Head of caudate nucleus (tissue), 42 donors: ENCODE measurements at regions of chr7 and their contacts with region 1.

Region 1: GRCh38 chr7:7542251-7542835 is 6.7 kb upstream of the COL28A1 start:
- DNase-seq: no peak

Region 2: GRCh38 chr7:7103343-7104313 is 438.7 kb before region 1 on chr7:
- intact Hi-C with region 1: loop called (anchors 5 kb)
- DNase-seq: peak in 4 of 42 donors; percentile 3 to 34 (median 20)

Region 3: GRCh38 chr7:7352845-7353244 is 189.5 kb before region 1 on chr7:
- intact Hi-C with region 1: no loop called
- DNase-seq: no peak

Region 4: GRCh38 chr7:7424151-7424873 is 118.0 kb before region 1 on chr7:
- intact Hi-C with region 1: loop called (anchors 5 kb)
- DNase-seq: peak; percentile 11 to 89 (median 66)

Region 5: GRCh38 chr7:7808156-7808555 is 265.8 kb after region 1 on chr7:
- intact Hi-C with region 1: no loop called
- DNase-seq: no peak